Caco-2 (cell line): ENCODE measurements at regions of chr7 and their contacts with region 1.

Region 1: DNA sequence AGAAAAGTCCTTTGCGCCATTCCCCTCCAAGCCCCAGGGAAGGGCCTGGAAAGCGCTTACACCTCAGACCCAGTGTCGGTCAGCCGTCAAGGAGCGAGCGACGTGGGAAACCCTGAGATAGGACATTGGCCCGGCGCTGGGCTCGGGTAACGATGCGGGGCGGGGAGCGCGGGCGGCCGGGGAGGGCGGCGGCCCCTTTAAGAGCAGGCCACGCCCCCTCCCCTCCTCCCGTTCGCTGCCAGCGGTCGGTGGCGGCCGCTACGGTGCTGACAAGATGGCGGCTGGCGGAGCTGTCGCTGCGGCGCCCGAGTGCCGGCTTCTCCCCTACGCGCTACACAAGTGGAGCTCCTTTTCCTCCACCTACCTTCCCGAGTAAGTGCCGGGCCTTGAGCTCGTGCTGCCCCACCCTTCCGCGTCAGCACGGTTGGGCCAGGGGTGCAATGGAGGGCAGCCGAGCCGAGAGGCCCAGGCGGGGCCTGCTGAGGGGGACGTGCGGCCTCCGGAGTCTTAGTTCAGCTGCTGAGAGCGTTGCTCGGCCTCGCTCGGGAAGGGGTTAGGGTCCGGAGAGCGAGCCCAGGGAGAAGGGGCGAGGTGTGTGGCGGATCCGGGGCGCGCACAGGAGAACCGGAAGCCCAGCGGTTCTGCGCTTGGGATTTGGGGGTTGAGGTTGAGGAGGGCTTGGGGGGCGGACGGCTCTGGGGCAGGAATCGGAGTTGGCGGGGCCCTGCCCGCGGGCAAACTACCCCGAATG is at the start of gene MKLN1:
- DNase-seq: peak; percentile 89 to 93
- H3K4me3 ChIP-seq: peak within 1 kb of the TSS; percentile 97
- H3K4me3 Mint-ChIP-seq: peak within 1 kb of the TSS; percentile 93
- H3K27ac Mint-ChIP-seq: peak within 1 kb of the TSS; percentile 97
- H3K4me1 ChIP-seq: peaks cover 22% of the 10 kb centered on the region
- H3K4me1 Mint-ChIP-seq: peaks cover 35% of the 10 kb centered on the region
- H3K27me3 ChIP-seq: no peaks in the 10 kb centered on the region
- H3K27me3 Mint-ChIP-seq: no peaks in the 10 kb centered on the region
- CTCF ChIP-seq: no peak
- total RNA-seq, gene MKLN1: 55.6 and 56.1 TPM in 2 replicates

Region 2: GRCh38 chr7:130884437-130885417 is 443.1 kb before region 1 on chr7:
- CTCF ChIA-PET with region 1: no interaction called
- POLR2A ChIA-PET with region 1: interaction called, 10 read pairs
- intact Hi-C with region 1: no loop called
- DNase-seq: peak in 1 of 2 experiments; percentile 49
- H3K4me3 ChIP-seq: no peak overlapping the region
- H3K4me3 Mint-ChIP-seq: no peak overlapping the region
- H3K27ac Mint-ChIP-seq: peak overlapping the region; percentile 60
- H3K4me1 ChIP-seq: peaks cover 18% of the 10 kb centered on the region
- H3K4me1 Mint-ChIP-seq: peaks cover 27% of the 10 kb centered on the region
- H3K27me3 ChIP-seq: no peaks in the 10 kb centered on the region
- H3K27me3 Mint-ChIP-seq: no peaks in the 10 kb centered on the region
- CTCF ChIP-seq: no peak

Region 3: DNA sequence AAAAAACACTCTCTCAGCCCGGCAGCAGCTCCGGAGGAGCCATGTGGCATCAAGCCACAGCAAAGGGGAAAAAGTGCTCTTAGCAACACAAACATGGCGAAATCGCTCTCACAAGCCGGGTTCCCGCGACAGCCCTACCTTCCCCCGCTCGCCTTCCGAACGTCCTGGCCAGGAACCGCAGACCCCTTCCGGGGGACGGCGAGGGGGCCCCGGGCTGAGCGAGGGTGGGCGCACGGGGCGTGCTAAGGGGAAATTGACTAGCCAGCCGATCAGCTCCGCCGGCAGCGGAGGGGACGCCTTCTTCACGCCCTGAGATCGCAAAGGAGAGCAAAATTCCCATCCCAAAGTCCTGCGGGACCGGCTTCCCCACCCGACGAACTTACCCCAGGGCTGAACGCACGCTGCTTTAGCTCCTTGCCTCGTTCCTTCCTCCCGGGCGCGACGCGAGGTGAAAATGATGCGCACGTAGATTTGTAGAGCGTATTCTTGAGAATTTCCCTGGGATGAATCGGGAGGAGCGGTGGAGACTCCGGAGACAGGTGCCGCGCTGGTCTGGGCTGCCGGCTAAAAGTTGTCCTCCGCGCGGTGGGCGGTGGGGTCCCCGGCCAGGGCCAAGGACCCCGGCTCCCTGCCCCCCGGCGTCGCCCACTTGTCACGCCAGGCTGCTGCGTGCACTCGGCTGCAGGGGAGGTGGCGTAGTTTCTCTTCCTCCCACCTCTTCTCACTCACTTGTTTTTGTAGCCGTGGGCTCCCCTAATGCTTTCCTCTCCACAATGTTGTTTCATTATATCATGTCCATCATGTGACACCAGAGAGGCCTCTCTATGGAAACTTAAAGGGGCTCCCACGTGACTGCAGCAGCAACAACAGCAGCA is 220.2 kb before region 1 on chr7:
- CTCF ChIA-PET with region 1: interaction called, 3 read pairs
- POLR2A ChIA-PET with region 1: no interaction called
- intact Hi-C with region 1: loop called (anchors 5 kb)
- DNase-seq: peak; percentile 49 to 59
- H3K4me3 ChIP-seq: peak overlapping the region; percentile 73
- H3K4me3 Mint-ChIP-seq: peak overlapping the region; percentile 79
- H3K27ac Mint-ChIP-seq: peak overlapping the region; percentile 87
- H3K4me1 ChIP-seq: peaks cover 20% of the 10 kb centered on the region
- H3K4me1 Mint-ChIP-seq: peaks cover 15% of the 10 kb centered on the region
- H3K27me3 ChIP-seq: 0 out of 2 replicates have a peak, but pooled peaks cover 1% of the 10 kb centered on the region
- H3K27me3 Mint-ChIP-seq: peaks cover 7% of the 10 kb centered on the region
- CTCF ChIP-seq: peak in 1 of 2 experiments; percentile 4

Region 4: DNA sequence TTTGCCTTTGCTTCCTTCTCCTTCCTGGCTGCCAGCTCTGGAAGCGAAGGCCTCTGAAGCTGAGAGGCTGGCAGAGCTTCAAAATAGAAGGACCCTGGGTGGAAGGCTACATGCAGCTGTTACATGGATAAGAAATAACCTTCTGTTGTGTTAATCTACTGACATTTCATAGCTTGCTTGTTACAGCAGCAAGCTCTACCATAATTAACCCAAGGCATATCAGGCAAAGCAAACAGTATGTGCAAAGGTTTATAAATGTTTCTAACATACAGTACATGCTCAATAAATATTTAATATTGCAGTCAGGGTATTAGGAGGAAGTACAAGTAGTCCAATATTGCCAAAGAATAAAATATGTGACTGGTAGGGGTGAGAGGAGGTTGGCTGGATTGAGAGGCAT is 55.7 kb before region 1 on chr7:
- CTCF ChIA-PET with region 1: no interaction called
- POLR2A ChIA-PET with region 1: no interaction called
- intact Hi-C with region 1: no loop called
- DNase-seq: no peak
- H3K4me3 ChIP-seq: no peak overlapping the region
- H3K4me3 Mint-ChIP-seq: no peak overlapping the region
- H3K27ac Mint-ChIP-seq: no peak overlapping the region
- H3K4me1 ChIP-seq: no peaks in the 10 kb centered on the region
- H3K4me1 Mint-ChIP-seq: peaks cover 7% of the 10 kb centered on the region
- H3K27me3 ChIP-seq: no peaks in the 10 kb centered on the region
- H3K27me3 Mint-ChIP-seq: no peaks in the 10 kb centered on the region
- CTCF ChIP-seq: no peak

Region 5: GRCh38 chr7:131293018-131293417 is 34.8 kb before region 1 on chr7:
- CTCF ChIA-PET with region 1: no interaction called
- POLR2A ChIA-PET with region 1: no interaction called
- intact Hi-C with region 1: no loop called
- DNase-seq: no peak
- H3K4me3 ChIP-seq: no peak overlapping the region
- H3K4me3 Mint-ChIP-seq: no peak overlapping the region
- H3K27ac Mint-ChIP-seq: no peak overlapping the region
- H3K4me1 ChIP-seq: peaks cover 15% of the 10 kb centered on the region
- H3K4me1 Mint-ChIP-seq: peaks cover 12% of the 10 kb centered on the region
- H3K27me3 ChIP-seq: no peaks in the 10 kb centered on the region
- H3K27me3 Mint-ChIP-seq: no peaks in the 10 kb centered on the region
- CTCF ChIP-seq: no peak

Region 6: DNA sequence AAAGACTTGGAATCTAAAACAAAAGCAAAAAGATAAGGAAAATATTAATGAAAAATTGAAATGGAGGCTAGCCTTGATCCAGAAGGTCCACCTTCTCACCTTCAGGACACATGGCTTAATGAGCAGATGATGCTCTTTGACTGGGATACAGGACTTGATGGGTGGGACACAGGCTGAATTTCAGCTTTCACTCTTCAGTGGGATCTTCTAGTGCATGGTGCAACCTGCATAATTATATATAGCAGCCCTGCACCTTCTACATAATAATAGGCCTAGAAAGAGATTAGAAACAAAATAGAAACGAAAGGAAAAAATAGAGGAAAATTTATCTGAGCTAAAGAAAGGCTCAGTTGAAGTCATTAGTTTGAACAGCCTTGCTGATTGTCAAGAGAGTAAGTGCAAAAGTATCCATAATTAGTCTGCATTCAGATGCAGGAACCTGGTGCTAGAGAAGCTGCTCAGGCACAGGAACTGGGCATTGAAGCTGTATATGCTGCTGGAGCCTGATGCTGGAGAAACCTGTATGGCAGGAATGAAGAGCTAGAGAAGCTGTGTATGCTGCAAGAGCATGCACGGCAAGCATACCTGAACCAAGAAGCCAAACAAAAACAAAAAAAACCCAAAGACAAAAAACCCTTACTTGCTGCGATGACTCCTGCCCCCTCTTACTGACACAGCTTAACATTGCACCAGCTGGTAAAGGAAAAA is 19.2 kb after region 1 on chr7:
- CTCF ChIA-PET with region 1: no interaction called
- POLR2A ChIA-PET with region 1: interaction called, 3 read pairs
- intact Hi-C with region 1: loop called (anchors 1 kb)
- DNase-seq: peak; percentile 56 to 69
- H3K4me3 ChIP-seq: no peak overlapping the region
- H3K4me3 Mint-ChIP-seq: no peak overlapping the region
- H3K27ac Mint-ChIP-seq: peak overlapping the region; percentile 12
- H3K4me1 ChIP-seq: peaks cover 8% of the 10 kb centered on the region; the same call in 1 of the 2 replicates
- H3K4me1 Mint-ChIP-seq: peaks cover 10% of the 10 kb centered on the region
- H3K27me3 ChIP-seq: no peaks in the 10 kb centered on the region
- H3K27me3 Mint-ChIP-seq: no peaks in the 10 kb centered on the region
- CTCF ChIP-seq: no peak

Region 7: GRCh38 chr7:131400833-131401593 is 73.2 kb after region 1 on chr7:
- CTCF ChIA-PET with region 1: interaction called, 4 read pairs
- POLR2A ChIA-PET with region 1: no interaction called
- intact Hi-C with region 1: loop called (anchors 5 kb)
- DNase-seq: peak in 1 of 2 experiments; percentile 43
- H3K4me3 ChIP-seq: no peak overlapping the region
- H3K4me3 Mint-ChIP-seq: peak overlapping the region; percentile 18
- H3K27ac Mint-ChIP-seq: peak overlapping the region; percentile 74
- H3K4me1 ChIP-seq: peaks cover 27% of the 10 kb centered on the region
- H3K4me1 Mint-ChIP-seq: peaks cover 30% of the 10 kb centered on the region
- H3K27me3 ChIP-seq: no peaks in the 10 kb centered on the region
- H3K27me3 Mint-ChIP-seq: no peaks in the 10 kb centered on the region
- CTCF ChIP-seq: no peak

Region 8: DNA sequence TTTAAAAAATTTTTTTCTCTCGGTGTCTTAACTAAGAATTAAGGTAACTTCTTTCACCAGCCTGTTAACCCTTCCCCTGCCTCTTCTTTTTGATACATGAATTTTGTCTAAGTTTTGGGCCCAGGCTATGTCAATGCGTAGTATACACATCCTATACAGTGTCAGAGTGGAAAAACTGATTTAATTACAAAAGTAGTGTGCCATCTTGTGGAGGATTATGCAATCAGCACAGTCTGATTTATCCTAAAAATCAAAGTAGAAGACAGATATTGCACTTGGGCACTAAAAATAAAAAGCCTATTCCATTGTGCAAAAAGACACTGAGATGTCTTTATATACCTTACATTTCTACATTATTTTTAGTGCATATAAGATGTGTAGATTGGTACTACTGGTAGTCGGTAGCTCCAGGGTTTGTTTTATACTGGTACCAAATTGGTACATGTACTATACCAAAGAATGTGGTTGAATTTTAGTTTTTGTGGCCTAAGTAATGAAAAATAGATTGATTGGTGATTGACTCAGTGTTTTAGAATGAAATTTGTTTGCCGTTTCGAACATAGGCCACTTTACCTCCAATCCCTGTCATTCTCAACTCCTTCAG is 96.5 kb after region 1 on chr7:
- CTCF ChIA-PET with region 1: no interaction called
- POLR2A ChIA-PET with region 1: interaction called, 14 read pairs
- intact Hi-C with region 1: no loop called
- DNase-seq: no peak
- H3K4me3 ChIP-seq: no peak overlapping the region
- H3K4me3 Mint-ChIP-seq: no peak overlapping the region
- H3K27ac Mint-ChIP-seq: no peak overlapping the region
- H3K4me1 ChIP-seq: no peaks in the 10 kb centered on the region
- H3K4me1 Mint-ChIP-seq: peaks cover 12% of the 10 kb centered on the region
- H3K27me3 ChIP-seq: no peaks in the 10 kb centered on the region
- H3K27me3 Mint-ChIP-seq: no peaks in the 10 kb centered on the region
- CTCF ChIP-seq: peak; percentile 41 to 51